Activated naive CD4-positive, alpha-beta T cell treated with anti-CD3 and anti-CD28 coated beads, Interleukin-2, amount 10 ng/mL, durations not matched to agents 7 days and 5 days (primary cell): ENCODE measurements at regions of chr9 and their contacts with region 1.

Region 1: DNA sequence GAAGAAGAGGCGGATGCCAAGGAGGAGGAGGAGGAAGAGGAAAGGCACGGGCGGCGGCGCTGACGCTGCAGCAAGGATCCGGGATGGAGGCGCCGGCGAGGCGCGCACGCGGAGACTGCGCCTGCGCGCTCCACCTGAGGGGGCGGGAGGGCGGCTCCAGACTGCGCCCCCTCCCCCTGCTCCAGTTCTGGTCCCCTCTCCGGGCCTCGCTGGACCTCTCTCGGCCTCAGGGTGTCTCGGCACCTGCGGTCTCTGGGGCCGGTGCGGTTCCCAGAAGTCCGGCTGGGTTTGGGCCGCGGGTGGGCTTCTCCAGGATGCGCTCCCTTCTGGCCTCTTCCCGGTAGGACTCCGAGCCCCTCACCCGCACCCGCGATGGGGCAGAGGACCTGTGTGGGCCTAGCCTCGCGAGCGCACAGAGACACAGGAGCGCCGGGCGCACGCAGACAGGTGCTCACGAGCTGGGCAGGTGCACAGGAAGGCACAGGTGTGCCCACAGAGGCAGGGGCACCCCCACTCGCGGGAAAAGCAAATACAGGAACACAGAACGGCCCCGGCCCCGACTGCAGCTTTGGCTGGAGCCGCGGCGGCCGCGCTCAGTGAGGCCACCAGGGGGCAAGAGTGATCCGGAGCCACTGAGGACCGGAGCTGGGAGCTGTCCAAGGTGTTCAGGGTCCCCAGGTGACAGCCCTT is at the start of gene NPDC1:
- DNase-seq: peak; percentile 92
- H3K4me3 Mint-ChIP-seq: peak within 1 kb of the TSS; percentile 75
- H3K27ac Mint-ChIP-seq: peak within 1 kb of the TSS; percentile 68
- H3K4me1 Mint-ChIP-seq: peaks cover 35% of the 10 kb centered on the region
- H3K27me3 Mint-ChIP-seq: peaks cover 86% of the 10 kb centered on the region

Region 2: GRCh38 chr9:137029058-137029936 is 16.9 kb before region 1 on chr9:
- CTCF ChIA-PET with region 1: interaction called, 17 read pairs
- DNase-seq: peak; percentile 81
- H3K4me3 Mint-ChIP-seq: peak overlapping the region; percentile 71
- H3K27ac Mint-ChIP-seq: peak overlapping the region; percentile 87
- H3K4me1 Mint-ChIP-seq: peaks cover 58% of the 10 kb centered on the region
- H3K27me3 Mint-ChIP-seq: peaks cover 35% of the 10 kb centered on the region

Region 3: GRCh38 chr9:137064027-137064879 is 18.0 kb after region 1 on chr9:
- CTCF ChIA-PET with region 1: interaction called, 103 read pairs
- DNase-seq: peak; percentile 69
- H3K4me3 Mint-ChIP-seq: no peak overlapping the region
- H3K27ac Mint-ChIP-seq: no peak overlapping the region
- H3K4me1 Mint-ChIP-seq: peaks cover 16% of the 10 kb centered on the region
- H3K27me3 Mint-ChIP-seq: peaks cover 3% of the 10 kb centered on the region

Region 4: DNA sequence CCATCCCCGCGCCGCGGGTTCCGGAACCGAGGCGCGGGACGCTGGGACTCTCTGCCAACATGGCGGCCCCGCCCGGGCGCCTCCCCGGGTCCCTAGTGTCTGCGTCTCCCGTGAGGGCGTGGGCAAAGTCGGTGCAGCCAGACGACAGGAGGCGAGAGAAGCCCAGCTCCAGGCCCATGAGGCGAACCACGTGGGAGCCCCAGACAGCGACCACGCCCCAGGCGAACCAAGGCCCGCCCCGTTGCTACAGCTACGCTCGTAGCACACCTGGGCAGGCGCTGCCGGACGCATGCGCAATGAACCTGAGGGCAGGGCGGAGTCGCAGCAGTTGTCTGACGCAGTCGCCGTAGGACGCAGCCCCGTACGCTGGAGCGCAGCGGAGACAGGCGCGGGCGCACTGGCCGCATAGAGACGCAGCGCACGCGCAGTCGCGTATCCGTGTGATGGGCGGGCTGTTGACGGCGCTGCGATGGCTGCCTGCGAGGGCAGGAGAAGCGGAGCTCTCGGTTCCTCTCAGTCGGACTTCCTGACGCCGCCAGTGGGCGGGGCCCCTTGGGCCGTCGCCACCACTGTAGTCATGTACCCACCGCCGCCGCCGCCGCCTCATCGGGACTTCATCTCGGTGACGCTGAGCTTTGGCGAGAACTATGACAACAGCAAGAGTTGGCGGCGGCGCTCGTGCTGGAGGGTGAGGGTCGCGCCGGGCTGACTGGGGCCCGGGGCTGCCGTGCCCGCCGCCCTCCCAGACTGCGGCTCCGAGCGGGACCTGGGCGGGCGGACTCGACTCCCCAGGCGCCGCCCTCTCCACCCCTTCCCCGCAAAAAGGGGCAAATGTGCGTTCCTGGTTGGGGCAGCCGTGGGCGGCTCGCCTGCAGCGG is 40.5 kb after region 1 on chr9 and contains the start of gene MAN1B1:
- CTCF ChIA-PET with region 1: interaction called, 11 read pairs
- DNase-seq: peak; percentile 100
- H3K4me3 Mint-ChIP-seq: peak within 1 kb of the TSS; percentile 92
- H3K27ac Mint-ChIP-seq: peak within 1 kb of the TSS; percentile 96
- H3K4me1 Mint-ChIP-seq: peaks cover 44% of the 10 kb centered on the region
- H3K27me3 Mint-ChIP-seq: no peaks in the 10 kb centered on the region